CD4-positive, alpha-beta T cell (primary cell): ENCODE measurements at regions of chr9 and their contacts with region 1.

Region 1: DNA sequence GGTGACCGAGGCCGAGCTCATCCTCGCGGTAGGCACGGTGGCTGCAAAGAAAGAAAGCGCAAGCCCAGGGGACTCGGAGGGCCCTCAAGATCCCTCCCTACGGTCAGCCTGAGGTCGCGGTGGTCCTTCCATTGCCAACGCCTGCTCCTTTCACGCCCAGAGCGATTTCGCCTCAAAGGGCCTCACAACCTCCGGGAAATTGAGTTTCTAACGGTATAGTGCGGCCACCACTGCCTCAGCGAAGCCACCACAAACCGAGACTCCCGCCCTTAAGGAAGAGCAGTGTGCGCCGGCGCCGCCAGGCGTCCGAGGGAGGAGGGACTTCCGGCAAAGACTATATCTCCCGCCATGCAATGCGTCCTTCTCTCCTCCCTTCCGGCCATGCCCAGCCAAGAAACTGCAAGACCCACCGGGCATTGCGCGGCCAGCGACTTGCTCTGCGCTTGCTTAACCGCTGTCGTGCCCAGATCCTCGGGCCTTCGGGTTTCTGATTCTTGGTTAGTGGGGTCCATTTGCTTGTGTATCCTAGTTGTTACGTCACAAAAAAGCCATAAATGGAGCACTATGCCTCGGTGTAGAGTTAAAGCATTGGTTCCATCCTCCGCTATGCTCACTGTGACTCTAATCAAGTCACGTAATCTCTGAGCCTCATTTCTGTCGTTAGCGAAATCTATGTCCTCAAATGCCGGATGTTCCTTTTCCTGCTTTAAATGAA is at the start of gene HAUS6:
- DNase-seq: peak; percentile 81 to 99 (median 92)
- ATAC-seq: peak; percentile 89
- H3K4me3 ChIP-seq: peak within 1 kb of the TSS; percentile 85
- H3K4me3 Mint-ChIP-seq: peak within 1 kb of the TSS; percentile 99
- H3K27ac ChIP-seq: peak within 1 kb of the TSS; percentile 81 to 85
- H3K27ac Mint-ChIP-seq: peak within 1 kb of the TSS; percentile 98
- H3K4me1 ChIP-seq: peaks cover 20% of the 10 kb centered on the region
- H3K4me1 Mint-ChIP-seq: peaks cover 31% of the 10 kb centered on the region
- H3K27me3 ChIP-seq: no peaks in the 10 kb centered on the region
- H3K27me3 Mint-ChIP-seq: no peaks in the 10 kb centered on the region
- CTCF ChIP-seq: peak; percentile 35
- total RNA-seq, gene HAUS6: 14.9 to 17.2 TPM

Region 2: GRCh38 chr9:19048966-19049916 is 53.5 kb before region 1 on chr9 and contains the start of gene RRAGA:
- CTCF ChIA-PET with region 1: interaction called, 11 read pairs
- POLR2A ChIA-PET with region 1: interaction called, 12 read pairs
- intact Hi-C with region 1: loop called (anchors 1 to 2 kb)
- DNase-seq: peak; percentile 89 to 97 (median 93)
- ATAC-seq: peak; percentile 90
- H3K4me3 ChIP-seq: peak within 1 kb of the TSS; percentile 94
- H3K4me3 Mint-ChIP-seq: peak within 1 kb of the TSS; percentile 97
- H3K27ac ChIP-seq: peak within 1 kb of the TSS; percentile 86 to 93
- H3K27ac Mint-ChIP-seq: peak within 1 kb of the TSS; percentile 99
- H3K4me1 ChIP-seq: peaks cover 27% of the 10 kb centered on the region
- H3K4me1 Mint-ChIP-seq: peaks cover 50% of the 10 kb centered on the region
- H3K27me3 ChIP-seq: no peaks in the 10 kb centered on the region
- H3K27me3 Mint-ChIP-seq: no peaks in the 10 kb centered on the region
- CTCF ChIP-seq: peak; percentile 78
- total RNA-seq, gene RRAGA: 34.4 to 34.7 TPM

Region 3: DNA sequence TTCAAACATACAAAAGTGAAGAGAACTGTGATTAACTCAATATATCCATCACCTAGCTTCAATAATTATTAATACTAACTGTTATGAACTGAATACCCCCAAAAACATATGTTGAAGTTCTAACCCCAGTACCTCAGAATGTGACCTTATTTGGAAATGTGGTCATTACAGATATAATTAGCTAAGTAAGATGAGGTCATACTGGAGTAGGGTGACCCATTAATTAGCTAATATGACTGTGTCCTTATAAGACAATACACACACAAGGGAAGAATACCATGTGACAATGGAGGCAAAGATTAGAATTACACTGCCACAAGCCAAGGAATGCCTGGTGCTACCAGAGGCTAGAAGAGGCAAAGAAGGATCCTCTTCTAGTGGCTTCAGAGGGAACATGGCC is 45.8 kb before region 1 on chr9:
- CTCF ChIA-PET with region 1: no interaction called
- POLR2A ChIA-PET with region 1: no interaction called
- intact Hi-C with region 1: loop called in 1 of 2 experiments (anchors 5 kb)
- DNase-seq: no peak
- ATAC-seq: no peak
- H3K4me3 ChIP-seq: no peak overlapping the region
- H3K4me3 Mint-ChIP-seq: no peak overlapping the region
- H3K27ac ChIP-seq: no peak overlapping the region
- H3K27ac Mint-ChIP-seq: no peak overlapping the region
- H3K4me1 ChIP-seq: no peaks in the 10 kb centered on the region
- H3K4me1 Mint-ChIP-seq: peaks cover 11% of the 10 kb centered on the region
- H3K27me3 ChIP-seq: no peaks in the 10 kb centered on the region
- H3K27me3 Mint-ChIP-seq: no peaks in the 10 kb centered on the region
- CTCF ChIP-seq: no peak

Region 4: DNA sequence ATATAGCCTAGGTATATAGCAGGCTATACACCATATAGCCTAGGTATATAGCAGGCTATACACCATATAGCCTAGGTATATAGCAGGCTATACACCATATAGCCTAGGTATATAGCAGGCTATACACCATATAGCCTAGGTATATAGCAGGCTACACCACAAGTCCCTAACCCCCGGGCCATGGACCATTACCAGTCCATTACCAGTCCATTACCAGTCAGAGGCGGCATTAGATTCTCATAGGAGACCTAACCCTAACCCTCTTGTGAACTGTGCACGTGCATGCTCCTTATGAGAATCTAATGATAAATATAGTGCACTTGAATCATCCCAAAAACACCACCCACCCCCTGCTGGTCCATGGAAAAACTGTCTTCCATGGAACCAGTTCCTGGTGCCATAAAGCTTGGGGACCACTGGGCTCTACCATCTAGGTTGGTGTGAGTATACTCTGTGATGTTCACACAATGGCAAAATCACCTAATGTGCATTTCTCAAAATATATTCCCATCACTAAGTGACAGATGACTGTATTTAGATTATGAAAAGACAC is 19.8 kb after region 1 on chr9:
- CTCF ChIA-PET with region 1: no interaction called
- POLR2A ChIA-PET with region 1: interaction called, 6 read pairs
- intact Hi-C with region 1: loop called (anchors 1 to 2 kb)
- DNase-seq: no peak
- ATAC-seq: no peak
- H3K4me3 ChIP-seq: no peak overlapping the region
- H3K4me3 Mint-ChIP-seq: no peak overlapping the region
- H3K27ac ChIP-seq: no peak overlapping the region
- H3K27ac Mint-ChIP-seq: peak overlapping the region; percentile 95
- H3K4me1 ChIP-seq: peaks cover 33% of the 10 kb centered on the region
- H3K4me1 Mint-ChIP-seq: peaks cover 65% of the 10 kb centered on the region
- H3K27me3 ChIP-seq: no peaks in the 10 kb centered on the region
- H3K27me3 Mint-ChIP-seq: no peaks in the 10 kb centered on the region
- CTCF ChIP-seq: no peak

Region 5: DNA sequence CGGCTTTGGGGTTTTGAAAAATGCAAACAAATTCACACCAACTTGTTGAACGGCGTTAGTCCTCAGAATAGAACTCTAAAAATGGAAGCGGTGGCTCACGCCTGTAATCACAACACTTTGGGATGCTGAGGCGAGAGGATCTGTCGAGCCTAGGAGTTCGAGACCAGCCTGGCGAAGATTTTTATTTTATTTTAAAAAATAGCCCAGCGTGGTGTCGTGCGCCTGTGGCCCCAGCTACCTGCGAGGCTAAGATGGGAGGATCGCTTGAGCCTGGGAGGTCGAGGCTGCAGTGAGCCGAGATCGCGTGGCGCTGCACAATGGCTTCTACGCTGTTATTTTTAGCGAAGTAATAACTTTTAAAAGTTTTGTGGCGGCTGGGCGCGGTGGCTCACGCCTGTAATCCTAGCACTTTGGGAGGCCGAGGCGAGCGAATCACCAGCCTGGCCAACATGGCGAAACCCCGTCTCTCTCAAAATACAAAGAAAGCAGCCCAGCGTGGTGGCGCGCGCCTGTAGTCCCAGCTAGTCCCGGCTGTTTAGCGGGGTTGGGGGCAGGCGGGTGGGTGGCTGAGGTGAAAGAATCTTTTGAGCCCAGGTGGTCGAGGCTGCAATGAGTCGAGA is 25.2 kb after region 1 on chr9:
- CTCF ChIA-PET with region 1: no interaction called
- POLR2A ChIA-PET with region 1: interaction called, 6 read pairs
- intact Hi-C with region 1: loop called in 1 of 2 experiments (anchors 1 kb)
- DNase-seq: peak; percentile 2 to 60 (median 32)
- ATAC-seq: peak; percentile 25
- H3K4me3 ChIP-seq: peak overlapping the region; percentile 90
- H3K4me3 Mint-ChIP-seq: peak overlapping the region; percentile 94
- H3K27ac ChIP-seq: peak overlapping the region; percentile 90 to 92
- H3K27ac Mint-ChIP-seq: peak overlapping the region; percentile 95
- H3K4me1 ChIP-seq: peaks cover 59% of the 10 kb centered on the region
- H3K4me1 Mint-ChIP-seq: peaks cover 64% of the 10 kb centered on the region
- H3K27me3 ChIP-seq: no peaks in the 10 kb centered on the region
- H3K27me3 Mint-ChIP-seq: no peaks in the 10 kb centered on the region
- CTCF ChIP-seq: no peak

Region 6: DNA sequence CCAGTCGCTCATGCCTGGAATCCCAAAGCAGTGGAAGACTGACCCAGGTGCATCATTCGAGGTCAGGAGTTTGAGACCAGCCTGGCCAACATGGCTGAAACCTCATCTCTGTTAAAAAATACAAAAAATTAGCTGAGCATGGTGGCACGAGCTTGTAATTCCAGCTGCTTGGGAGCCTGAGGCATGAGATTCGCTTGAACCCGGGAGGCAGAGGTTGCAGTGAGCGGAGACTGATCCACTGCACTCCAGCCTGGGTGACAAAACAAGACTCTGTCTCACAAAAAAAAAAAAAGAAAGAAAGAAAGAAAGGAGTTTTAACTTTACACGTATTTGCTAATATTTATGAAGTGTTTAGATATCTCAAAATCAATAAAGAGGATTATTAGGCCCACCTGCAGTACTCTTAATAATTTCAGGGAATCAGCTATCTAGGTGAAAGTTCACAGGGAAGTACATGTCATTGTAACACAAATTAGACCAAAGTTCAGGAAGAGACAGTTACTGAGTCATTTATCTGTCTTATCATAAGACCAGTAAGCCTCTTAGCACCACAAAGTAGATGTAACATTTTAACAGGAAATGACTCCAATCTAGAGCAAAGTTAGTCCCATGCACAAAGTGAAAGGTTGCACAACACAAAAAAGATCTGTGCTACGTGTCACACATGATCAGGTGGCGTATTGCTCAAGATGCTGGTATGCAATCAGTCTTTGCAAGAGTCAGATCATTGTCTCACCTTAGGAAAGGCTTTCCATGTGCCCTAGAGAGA is 58.7 kb after region 1 on chr9:
- CTCF ChIA-PET with region 1: no interaction called
- POLR2A ChIA-PET with region 1: no interaction called
- intact Hi-C with region 1: loop called in 1 of 2 experiments (anchors 2 kb)
- DNase-seq: peak in 10 of 14 experiments; percentile 5 to 89 (median 32)
- ATAC-seq: peak; percentile 97
- H3K4me3 ChIP-seq: no peak overlapping the region
- H3K4me3 Mint-ChIP-seq: peak overlapping the region; percentile 5
- H3K27ac ChIP-seq: peak overlapping the region; percentile 18 to 73
- H3K27ac Mint-ChIP-seq: peak overlapping the region; percentile 58
- H3K4me1 ChIP-seq: peaks cover 19% of the 10 kb centered on the region
- H3K4me1 Mint-ChIP-seq: peaks cover 15% of the 10 kb centered on the region
- H3K27me3 ChIP-seq: no peaks in the 10 kb centered on the region
- H3K27me3 Mint-ChIP-seq: no peaks in the 10 kb centered on the region
- CTCF ChIP-seq: no peak